Activated CD4-positive, alpha-beta T cell treated with anti-CD3 and anti-CD28 coated beads, Interleukin-2, amount 10 ng/mL, durations not matched to agents 7 days and 5 days (primary cell): ENCODE measurements at regions of chr15 and their contacts with region 1.

Region 1: DNA sequence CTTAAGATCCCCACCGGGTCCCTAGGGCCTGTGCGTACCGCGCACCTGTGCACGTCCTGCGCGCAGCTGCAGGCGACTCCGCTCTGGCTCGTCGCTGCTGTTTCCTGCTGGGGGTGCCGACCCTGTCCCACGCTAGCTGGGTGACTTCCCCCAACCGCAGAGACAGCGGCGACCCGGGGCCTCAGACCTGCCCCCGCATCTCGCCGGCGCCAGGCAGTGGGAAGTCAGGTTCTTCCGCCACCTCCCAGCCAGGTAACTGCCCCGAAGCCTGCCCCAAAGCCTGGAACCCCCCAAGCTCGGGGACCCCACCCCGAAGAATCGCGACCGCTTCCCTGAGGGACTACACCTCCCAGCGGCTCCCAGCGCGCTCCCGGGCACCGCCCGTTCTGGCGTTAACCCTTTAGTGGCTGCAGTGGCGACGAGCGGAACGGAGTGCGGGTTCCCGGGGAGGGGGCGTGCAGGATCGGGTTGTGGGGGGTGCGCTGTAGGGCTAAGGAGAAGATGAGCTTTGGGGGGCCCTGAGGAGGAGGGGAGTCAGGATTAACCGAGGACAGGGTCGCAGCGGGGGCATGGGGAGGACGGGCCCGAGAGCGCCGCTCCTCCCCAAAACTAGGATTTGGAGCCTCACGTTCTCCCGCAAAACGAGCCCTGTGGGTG is 511 bp downstream of the NEIL1 start:
- DNase-seq: peak; percentile 28
- H3K4me3 Mint-ChIP-seq: peak overlapping the region; percentile 61
- H3K27ac Mint-ChIP-seq: peak overlapping the region; percentile 54
- H3K4me1 Mint-ChIP-seq: peaks cover 35% of the 10 kb centered on the region
- H3K27me3 Mint-ChIP-seq: peaks cover 25% of the 10 kb centered on the region

Region 2: DNA sequence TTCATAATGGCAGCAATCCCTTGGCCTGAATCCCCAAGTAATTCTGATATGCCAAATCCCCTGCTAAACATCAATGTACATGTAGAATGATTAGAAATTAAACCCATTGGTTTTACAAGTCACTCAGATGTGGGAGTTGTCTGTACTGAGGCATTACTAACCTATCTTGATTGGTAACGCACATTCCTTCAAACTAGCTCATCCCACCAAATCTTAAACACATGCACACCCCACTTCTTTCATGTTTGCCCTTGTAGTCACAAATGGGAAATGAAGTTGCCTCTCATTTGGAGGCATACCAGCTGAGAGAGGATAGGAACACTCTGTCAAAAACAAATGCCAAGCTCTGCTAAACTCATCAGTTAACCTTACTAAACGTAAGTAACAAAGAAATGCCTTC is 50.1 kb after region 1 on chr15:
- CTCF ChIA-PET with region 1: no interaction called
- POLR2A ChIA-PET with region 1: no interaction called
- DNase-seq: no peak
- H3K4me3 Mint-ChIP-seq: no peak overlapping the region
- H3K27ac Mint-ChIP-seq: no peak overlapping the region
- H3K4me1 Mint-ChIP-seq: peaks cover 6% of the 10 kb centered on the region
- H3K27me3 Mint-ChIP-seq: no peaks in the 10 kb centered on the region

Region 3: DNA sequence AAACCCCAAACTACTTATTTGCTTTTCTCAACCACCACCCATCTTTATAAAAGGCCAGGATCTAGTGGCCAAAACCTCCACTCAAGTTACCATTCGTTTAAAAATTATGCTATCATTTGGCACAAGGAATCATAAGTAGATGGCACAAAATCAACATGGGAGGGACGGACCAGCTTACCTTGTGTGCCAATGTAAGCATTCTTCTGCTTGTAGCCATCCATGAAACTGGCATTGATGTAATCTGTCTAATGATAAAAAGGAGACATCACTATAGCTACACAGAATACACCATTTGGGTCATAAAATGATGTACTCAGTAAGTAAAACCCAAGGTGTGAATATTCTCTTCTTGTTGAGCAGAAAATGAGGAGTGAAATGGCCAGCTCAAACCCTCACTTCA is 132.3 kb after region 1 on chr15:
- CTCF ChIA-PET with region 1: no interaction called
- POLR2A ChIA-PET with region 1: no interaction called
- DNase-seq: no peak
- H3K4me3 Mint-ChIP-seq: no peak overlapping the region
- H3K27ac Mint-ChIP-seq: no peak overlapping the region
- H3K4me1 Mint-ChIP-seq: peaks cover 4% of the 10 kb centered on the region
- H3K27me3 Mint-ChIP-seq: no peaks in the 10 kb centered on the region

Region 4: GRCh38 chr15:76310475-76311099 is 963.2 kb after region 1 on chr15:
- CTCF ChIA-PET with region 1: no interaction called
- POLR2A ChIA-PET with region 1: interaction called, 12 read pairs
- DNase-seq: peak; percentile 16
- H3K4me3 Mint-ChIP-seq: peak overlapping the region; percentile 90
- H3K27ac Mint-ChIP-seq: peak overlapping the region; percentile 85
- H3K4me1 Mint-ChIP-seq: peaks cover 32% of the 10 kb centered on the region
- H3K27me3 Mint-ChIP-seq: no peaks in the 10 kb centered on the region